ENCODE measurements at regions of chrX and their contacts with region 1.

Region 1: DNA sequence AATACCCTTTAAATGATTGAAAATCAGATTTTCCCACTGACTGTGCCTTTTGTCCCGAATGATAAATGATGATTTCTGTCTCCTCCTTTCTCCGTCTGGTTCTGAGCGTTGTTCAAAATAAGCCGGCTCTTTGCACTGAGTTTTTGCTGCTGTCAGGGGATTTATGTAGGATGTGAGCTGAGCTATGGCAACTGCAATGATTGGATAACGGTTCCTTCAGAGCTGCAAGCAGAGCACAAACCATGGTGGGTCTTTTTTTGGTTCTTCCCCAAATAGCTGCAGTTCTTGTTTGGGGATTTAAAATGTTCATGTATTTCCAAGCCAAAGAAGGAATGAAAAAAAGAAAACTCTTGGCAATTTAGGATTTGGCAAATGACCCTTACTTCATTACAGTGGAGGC is 124.5 kb upstream of the CASK start:
- DNase-seq: no peak
- H3K4me3 ChIP-seq: no peak overlapping the region
- H3K4me3 Mint-ChIP-seq: no peak overlapping the region
- H3K27ac ChIP-seq: no peak overlapping the region
- H3K27ac Mint-ChIP-seq: no peak overlapping the region
- H3K4me1 ChIP-seq: no peaks in the 10 kb centered on the region
- H3K4me1 Mint-ChIP-seq: peaks cover 0 to 1% (median 0%) of the 10 kb centered on the region in 4 donors
- H3K27me3 ChIP-seq: no peaks in the 10 kb centered on the region
- H3K27me3 Mint-ChIP-seq: no peaks in the 10 kb centered on the region

Region 2: DNA sequence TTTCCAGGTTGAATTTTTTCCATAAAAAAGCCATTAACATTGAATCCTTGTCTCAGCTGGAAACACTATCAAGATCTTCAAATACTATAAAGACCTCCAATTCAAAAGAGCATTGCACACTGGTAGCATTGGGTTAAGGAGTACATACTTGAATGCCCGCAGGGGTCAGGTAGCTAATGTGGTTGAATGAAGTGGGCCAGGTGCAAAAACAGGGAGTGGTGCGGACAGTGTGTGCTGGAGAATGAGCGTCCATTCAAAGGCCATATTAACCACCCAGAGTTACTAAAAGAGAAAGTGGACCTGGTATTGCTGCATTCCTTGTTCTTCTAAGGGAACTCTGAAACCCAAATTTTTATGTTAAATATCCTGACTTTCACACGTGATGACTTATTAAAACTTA is 509.2 kb before region 1 on chrX:
- CTCF ChIA-PET with region 1: no interaction called
- POLR2A ChIA-PET with region 1: no interaction called
- intact Hi-C with region 1: loop called (anchors 10 kb)
- DNase-seq: no peak
- H3K4me3 ChIP-seq: no peak overlapping the region
- H3K4me3 Mint-ChIP-seq: no peak overlapping the region
- H3K27ac ChIP-seq: no peak overlapping the region
- H3K27ac Mint-ChIP-seq: no peak overlapping the region
- H3K4me1 ChIP-seq: no peaks in the 10 kb centered on the region
- H3K4me1 Mint-ChIP-seq: peaks cover 0 to 4% (median under 1%) of the 10 kb centered on the region in 4 donors
- H3K27me3 ChIP-seq: no peaks in the 10 kb centered on the region
- H3K27me3 Mint-ChIP-seq: no peaks in the 10 kb centered on the region